Activated naive CD4-positive, alpha-beta T cell treated with anti-CD3 and anti-CD28 coated beads, Interleukin-2, amount 10 ng/mL, durations not matched to agents 7 days and 5 days (primary cell): ENCODE measurements at regions of chr12 and their contacts with region 1.

Region 1: GRCh38 chr12:53746592-53747092 is 5.1 kb downstream of the CISTR start:
- DNase-seq: peak; percentile 93
- H3K4me3 Mint-ChIP-seq: no peak overlapping the region
- H3K27ac Mint-ChIP-seq: no peak overlapping the region
- H3K4me1 Mint-ChIP-seq: peaks cover 6% of the 10 kb centered on the region
- H3K27me3 Mint-ChIP-seq: no peaks in the 10 kb centered on the region

Region 2: DNA sequence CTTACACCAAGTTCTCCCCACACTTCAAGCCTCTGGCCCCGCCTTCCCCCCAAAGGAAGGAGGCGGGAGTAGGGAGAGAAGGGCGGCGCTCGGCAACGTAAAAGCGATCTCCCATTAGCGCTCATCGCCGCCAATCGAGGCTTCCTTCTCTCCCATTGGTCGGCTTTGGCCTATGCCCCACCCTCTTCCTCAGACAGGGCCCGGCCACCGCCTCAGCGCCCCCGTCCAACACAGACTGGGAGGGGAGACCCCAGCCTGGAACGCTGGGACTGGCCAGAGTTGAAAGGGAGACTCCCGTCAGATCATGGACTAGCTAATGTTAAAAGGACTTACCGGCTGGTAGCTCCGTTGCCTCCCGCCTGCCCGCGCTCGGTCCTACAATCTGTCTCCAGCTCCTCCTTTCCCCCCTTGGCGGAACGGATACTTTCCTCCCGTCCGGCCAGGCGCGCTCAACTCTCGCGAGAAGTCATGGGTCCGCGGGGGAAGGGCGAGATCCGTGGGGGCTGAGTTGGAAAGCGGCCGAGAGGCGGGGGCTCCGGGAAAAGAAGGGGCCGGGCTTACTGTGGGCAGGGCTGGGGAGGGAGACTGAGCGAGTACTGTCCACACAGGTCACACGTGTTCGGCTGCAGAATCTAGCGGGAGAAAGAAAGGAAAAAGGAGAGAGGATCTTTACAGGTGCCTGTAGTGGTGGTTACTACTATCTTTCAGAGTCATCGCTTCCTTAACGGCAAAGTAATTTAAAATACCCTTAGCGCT is 120.5 kb before region 1 on chr12 and contains the start of gene ATF7:
- CTCF ChIA-PET with region 1: no interaction called
- DNase-seq: peak; percentile 99
- H3K4me3 Mint-ChIP-seq: peak within 1 kb of the TSS; percentile 97
- H3K27ac Mint-ChIP-seq: peak within 1 kb of the TSS; percentile 92
- H3K4me1 Mint-ChIP-seq: peaks cover 42% of the 10 kb centered on the region
- H3K27me3 Mint-ChIP-seq: peaks cover 4% of the 10 kb centered on the region

Region 3: DNA sequence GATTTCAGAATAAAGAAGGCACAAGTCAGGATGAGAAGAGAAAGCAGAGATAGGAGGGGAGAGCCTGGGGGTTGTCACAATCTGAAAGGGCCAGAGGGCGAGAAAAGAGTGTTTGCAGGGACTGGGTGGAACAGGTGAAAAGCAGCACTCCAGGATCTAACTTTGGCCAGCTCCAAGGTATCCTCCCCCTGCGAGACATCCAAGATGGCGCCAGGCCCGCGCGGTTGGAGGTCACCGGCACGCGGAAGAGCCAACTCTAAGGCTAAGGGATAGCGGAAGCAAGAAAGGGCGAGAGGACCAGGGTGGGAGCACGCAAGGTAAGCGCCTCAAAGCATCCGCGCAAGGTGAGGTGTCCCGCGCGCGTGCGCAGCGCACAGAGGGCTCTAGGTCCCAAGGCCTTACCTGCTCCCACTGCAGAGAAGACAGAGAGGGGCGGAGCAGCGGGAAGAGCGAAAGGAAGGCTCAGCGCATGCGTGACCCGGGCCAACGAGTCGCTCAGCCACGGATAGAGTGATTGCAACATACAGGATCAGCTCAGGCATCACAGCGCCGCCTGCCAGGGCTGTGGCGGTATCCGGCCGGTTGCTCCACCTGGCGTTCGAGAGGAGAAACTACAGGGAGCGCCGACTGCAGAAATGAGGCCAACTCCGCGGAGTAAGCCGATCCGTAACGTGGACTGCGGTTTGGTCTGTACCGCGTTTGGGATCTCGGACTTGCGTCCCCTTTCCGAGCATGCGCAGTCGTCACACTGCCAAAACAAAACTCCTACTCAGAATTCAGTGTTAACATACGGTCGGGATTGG is 70.8 kb before region 1 on chr12 and contains the start of gene ATP5MC2:
- CTCF ChIA-PET with region 1: interaction called, 10 read pairs
- DNase-seq: peak; percentile 98
- H3K4me3 Mint-ChIP-seq: peak within 1 kb of the TSS; percentile 97
- H3K27ac Mint-ChIP-seq: peak within 1 kb of the TSS; percentile 95
- H3K4me1 Mint-ChIP-seq: peaks cover 44% of the 10 kb centered on the region
- H3K27me3 Mint-ChIP-seq: peaks cover 44% of the 10 kb centered on the region

Region 4: DNA sequence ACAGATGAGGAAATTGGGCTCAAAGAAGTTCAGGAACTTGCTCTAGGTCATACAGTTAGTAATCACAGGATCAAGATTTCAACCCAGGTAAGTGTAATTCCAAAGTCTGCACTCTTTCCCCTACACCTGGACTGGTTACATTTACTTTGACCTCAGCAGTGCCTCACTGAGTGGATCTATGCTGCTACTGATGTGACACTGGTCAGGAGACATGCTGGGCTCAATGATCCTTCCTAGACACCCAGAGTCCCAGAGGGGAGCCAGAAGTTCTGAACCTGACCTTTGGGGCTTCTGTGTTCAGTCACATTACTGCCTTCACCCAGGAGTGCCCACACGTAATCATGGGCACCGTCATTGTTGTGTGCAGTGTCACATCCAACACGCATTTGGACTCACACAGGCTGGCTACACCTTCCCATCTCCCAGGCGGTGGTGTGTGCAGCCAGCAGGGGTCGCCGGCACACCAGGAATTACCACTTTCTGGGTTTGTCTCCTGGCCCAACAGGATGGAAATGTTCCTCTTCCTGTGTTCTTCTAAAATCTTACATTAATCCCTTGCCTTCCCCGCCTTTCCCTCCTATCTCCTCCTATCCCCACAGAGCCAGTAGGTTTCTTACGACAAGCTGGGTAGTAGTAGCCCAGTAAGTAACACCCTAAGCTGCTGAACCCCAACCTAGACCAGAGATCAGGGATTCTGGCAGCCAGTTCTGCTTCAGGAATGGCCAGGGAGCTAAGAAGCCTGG is 45.0 kb before region 1 on chr12:
- CTCF ChIA-PET with region 1: interaction called, 165 read pairs
- DNase-seq: peak; percentile 85
- H3K4me3 Mint-ChIP-seq: no peak overlapping the region
- H3K27ac Mint-ChIP-seq: no peak overlapping the region
- H3K4me1 Mint-ChIP-seq: peaks cover 6% of the 10 kb centered on the region
- H3K27me3 Mint-ChIP-seq: peaks cover 88% of the 10 kb centered on the region

Region 5: GRCh38 chr12:53717319-53717718 is 29.3 kb before region 1 on chr12:
- CTCF ChIA-PET with region 1: interaction called, 17 read pairs
- DNase-seq: no peak
- H3K4me3 Mint-ChIP-seq: no peak overlapping the region
- H3K27ac Mint-ChIP-seq: no peak overlapping the region
- H3K4me1 Mint-ChIP-seq: no peaks in the 10 kb centered on the region
- H3K27me3 Mint-ChIP-seq: no peaks in the 10 kb centered on the region

Region 6: DNA sequence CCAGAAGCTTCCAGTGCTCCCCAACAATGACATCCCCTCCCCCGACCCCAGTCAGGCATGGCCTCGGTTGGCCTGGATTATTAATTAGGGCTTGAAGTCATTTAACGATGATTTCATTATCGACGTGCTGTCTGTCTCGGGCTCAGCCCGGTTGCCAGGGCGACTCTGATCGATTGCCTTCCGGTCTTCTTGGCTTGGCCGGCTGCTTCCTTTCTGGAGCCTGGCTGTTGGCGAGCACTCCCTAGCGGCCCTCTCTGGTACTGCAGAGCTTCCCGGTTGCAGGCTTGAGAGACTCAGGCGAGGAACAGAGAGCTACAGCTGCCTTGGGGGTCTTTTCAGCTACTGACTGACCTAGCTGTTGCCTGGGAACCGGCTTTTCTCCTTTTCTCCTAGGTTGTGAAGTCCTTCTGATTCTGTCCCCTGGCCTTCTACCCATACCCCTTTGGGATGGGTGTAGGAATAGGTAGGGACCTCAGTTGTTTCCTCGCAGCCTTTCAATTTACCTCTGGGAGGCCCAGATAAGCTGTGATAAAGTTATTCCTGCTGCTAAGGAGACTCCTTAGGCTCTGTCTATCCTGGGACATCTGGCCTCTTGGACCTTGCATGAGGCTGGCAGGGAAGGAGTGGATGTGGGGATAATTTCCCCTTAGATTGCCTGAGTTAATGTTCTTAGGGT is 10.6 kb after region 1 on chr12:
- CTCF ChIA-PET with region 1: interaction called, 122 read pairs
- DNase-seq: peak; percentile 89
- H3K4me3 Mint-ChIP-seq: peak overlapping the region; percentile 25
- H3K27ac Mint-ChIP-seq: no peak overlapping the region
- H3K4me1 Mint-ChIP-seq: peaks cover 15% of the 10 kb centered on the region
- H3K27me3 Mint-ChIP-seq: peaks cover 49% of the 10 kb centered on the region